ENCODE measurements at regions of chr17 and their contacts with region 1.

Region 1: DNA sequence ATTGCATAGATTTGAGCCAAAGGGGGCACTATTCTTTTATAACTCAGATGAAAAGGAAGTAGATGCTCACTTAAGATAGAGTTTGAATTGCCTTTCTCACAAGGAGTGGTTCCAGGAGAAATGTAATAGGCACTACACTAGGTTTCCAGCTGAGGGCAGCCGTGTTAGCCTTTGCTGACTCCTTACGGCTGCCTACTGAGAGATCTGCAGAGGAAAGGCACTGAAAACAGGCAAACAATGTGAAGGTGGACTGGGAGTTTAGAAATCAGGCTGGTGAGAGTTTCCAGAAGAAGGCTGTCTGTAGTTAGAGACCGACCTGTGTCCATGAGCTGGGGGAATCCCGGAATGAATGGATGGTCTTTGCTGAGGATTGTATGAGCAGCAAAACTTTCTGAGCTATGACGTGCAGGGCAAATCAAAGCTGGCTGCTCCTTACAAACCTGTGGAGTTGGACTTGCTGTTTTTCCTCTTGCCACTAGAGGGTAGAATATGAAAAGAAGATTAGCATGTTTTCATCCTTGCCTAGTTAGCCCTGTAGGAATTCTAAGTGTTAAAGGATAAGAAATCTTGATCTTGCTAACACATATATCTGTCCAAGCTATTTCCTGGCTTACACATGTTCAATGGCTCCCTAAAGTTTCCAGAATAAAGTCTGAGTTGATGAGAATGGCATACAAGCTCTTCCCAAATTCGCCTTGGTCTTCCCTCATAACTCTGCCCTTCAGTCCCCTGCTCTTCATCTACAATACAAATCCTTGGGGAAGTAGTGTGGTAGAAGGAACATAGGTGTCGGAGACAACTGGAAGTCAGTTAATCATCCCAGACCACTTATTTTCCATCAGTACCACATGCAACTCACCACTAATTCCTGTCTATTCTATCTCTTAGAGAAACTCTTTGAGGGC is 20.1 kb upstream of the TAOK1 start:
- DNase-seq: peak; percentile 30
- H3K4me3 Mint-ChIP-seq: no peak overlapping the region
- H3K27ac Mint-ChIP-seq: no peak overlapping the region
- H3K4me1 Mint-ChIP-seq: no peaks in the 10 kb centered on the region
- H3K27me3 Mint-ChIP-seq: peaks cover 5% of the 10 kb centered on the region

Region 2: GRCh38 chr17:29533976-29534375 is 163.9 kb after region 1 on chr17:
- intact Hi-C with region 1: loop called (anchors 1 kb)
- DNase-seq: no peak
- H3K4me3 Mint-ChIP-seq: no peak overlapping the region
- H3K27ac Mint-ChIP-seq: no peak overlapping the region
- H3K4me1 Mint-ChIP-seq: no peaks in the 10 kb centered on the region
- H3K27me3 Mint-ChIP-seq: no peaks in the 10 kb centered on the region

Measured in activated T-helper 1 cell treated with anti-CD3 and anti-CD28 coated beads, Interleukin-12 subunit alpha, Interleukin-12 subunit beta, Interleukin-2, Interleukin-4 antibody, amounts not matched to agents 30 ng/mL and 10 ng/mL and 1 ng/mL, durations not matched to agents 14 hours and 24 hours and 36 hours (primary cell).